ENCODE measurements at regions of chr6 and their contacts with region 1.

Region 1: GRCh38 chr6:33914645-33915044 is 110.8 kb upstream of the MLN start:
- DNase-seq: peak; percentile 73
- ATAC-seq: peak; percentile 76
- H3K4me3 Mint-ChIP-seq: no peak overlapping the region
- H3K27ac Mint-ChIP-seq: peak overlapping the region; percentile 8
- H3K4me1 Mint-ChIP-seq: peaks cover 34% of the 10 kb centered on the region
- H3K27me3 Mint-ChIP-seq: no peaks in the 10 kb centered on the region
- CTCF ChIP-seq: no peak

Region 2: DNA sequence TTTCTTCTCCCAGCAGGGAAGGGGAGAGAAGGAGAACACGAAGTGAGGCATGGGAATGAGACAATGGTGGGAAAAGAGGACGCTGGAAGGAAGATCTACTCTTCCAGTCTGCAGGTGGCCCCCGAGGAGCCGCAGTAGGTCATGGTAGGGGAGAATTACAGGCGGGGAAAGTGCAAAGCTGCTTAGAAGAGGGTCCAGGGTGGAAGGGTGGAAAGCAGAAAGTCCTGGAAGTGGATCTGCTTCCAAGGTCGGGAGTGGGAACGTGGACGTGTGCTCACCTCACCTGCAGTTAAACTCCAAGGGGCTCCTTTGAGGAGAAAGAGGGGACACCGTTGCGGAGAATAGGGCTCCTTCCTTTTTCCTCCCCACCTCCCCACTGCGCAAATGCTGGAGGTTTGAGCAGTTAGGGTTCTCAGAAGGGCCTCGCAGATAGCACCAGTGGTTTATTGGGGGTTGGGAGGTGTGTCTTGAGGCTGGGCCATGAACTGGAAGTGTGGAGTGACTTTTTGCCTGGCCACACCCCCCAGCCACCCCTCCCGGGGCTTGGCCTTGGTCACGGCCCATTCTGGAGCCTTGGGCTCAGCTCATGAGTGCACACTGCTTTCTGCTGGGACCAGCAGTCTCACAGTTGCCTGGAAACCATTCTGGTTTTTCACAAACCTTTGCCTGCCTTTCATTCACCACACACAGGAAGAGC is 10.4 kb before region 1 on chr6:
- CTCF ChIA-PET with region 1: interaction called, 10 read pairs
- POLR2A ChIA-PET with region 1: no interaction called
- intact Hi-C with region 1: no loop called
- DNase-seq: peak; percentile 88
- ATAC-seq: peak; percentile 95
- H3K4me3 Mint-ChIP-seq: peak overlapping the region; percentile 27
- H3K27ac Mint-ChIP-seq: peak overlapping the region; percentile 77
- H3K4me1 Mint-ChIP-seq: peaks cover 54% of the 10 kb centered on the region
- H3K27me3 Mint-ChIP-seq: no peaks in the 10 kb centered on the region
- CTCF ChIP-seq: no peak

Region 3: GRCh38 chr6:33947916-33948594 is 33.4 kb after region 1 on chr6:
- CTCF ChIA-PET with region 1: no interaction called
- POLR2A ChIA-PET with region 1: no interaction called
- intact Hi-C with region 1: no loop called
- DNase-seq: no peak
- ATAC-seq: no peak
- H3K4me3 Mint-ChIP-seq: no peak overlapping the region
- H3K27ac Mint-ChIP-seq: no peak overlapping the region
- H3K4me1 Mint-ChIP-seq: no peaks in the 10 kb centered on the region
- H3K27me3 Mint-ChIP-seq: no peaks in the 10 kb centered on the region
- CTCF ChIP-seq: no peak

Region 4: GRCh38 chr6:34005901-34006531 is 91.4 kb after region 1 on chr6:
- CTCF ChIA-PET with region 1: no interaction called
- POLR2A ChIA-PET with region 1: no interaction called
- intact Hi-C with region 1: no loop called
- DNase-seq: no peak
- ATAC-seq: no peak
- H3K4me3 Mint-ChIP-seq: no peak overlapping the region
- H3K27ac Mint-ChIP-seq: no peak overlapping the region
- H3K4me1 Mint-ChIP-seq: no peaks in the 10 kb centered on the region
- H3K27me3 Mint-ChIP-seq: peaks cover 2% of the 10 kb centered on the region
- CTCF ChIP-seq: no peak

Region 5: GRCh38 chr6:34110610-34111009 is 196.0 kb after region 1 on chr6:
- CTCF ChIA-PET with region 1: no interaction called
- POLR2A ChIA-PET with region 1: no interaction called
- intact Hi-C with region 1: no loop called
- DNase-seq: no peak
- ATAC-seq: no peak
- H3K4me3 Mint-ChIP-seq: no peak overlapping the region
- H3K27ac Mint-ChIP-seq: no peak overlapping the region
- H3K4me1 Mint-ChIP-seq: no peaks in the 10 kb centered on the region
- H3K27me3 Mint-ChIP-seq: peaks cover 18% of the 10 kb centered on the region
- CTCF ChIP-seq: no peak